ENCODE measurements at regions of chr9 and their contacts with region 1.

Region 1: GRCh38 chr9:16309469-16310271 is 560.8 kb downstream of the BNC2 start:
- DNase-seq: peak; percentile 34 to 57
- ATAC-seq: peak; percentile 61 to 85 (median 78)
- H3K4me3 ChIP-seq: no peak overlapping the region
- H3K27ac ChIP-seq: peak overlapping the region in 4 of 10 donors; percentile 37 to 48 (median 43)
- H3K4me1 ChIP-seq: peaks cover 0 to 13% (median 5%) of the 10 kb centered on the region in 9 donors
- H3K27me3 ChIP-seq: peaks cover 0 to 20% (median 0%) of the 10 kb centered on the region in 7 donors
- CTCF ChIP-seq: no peak

Region 2: DNA sequence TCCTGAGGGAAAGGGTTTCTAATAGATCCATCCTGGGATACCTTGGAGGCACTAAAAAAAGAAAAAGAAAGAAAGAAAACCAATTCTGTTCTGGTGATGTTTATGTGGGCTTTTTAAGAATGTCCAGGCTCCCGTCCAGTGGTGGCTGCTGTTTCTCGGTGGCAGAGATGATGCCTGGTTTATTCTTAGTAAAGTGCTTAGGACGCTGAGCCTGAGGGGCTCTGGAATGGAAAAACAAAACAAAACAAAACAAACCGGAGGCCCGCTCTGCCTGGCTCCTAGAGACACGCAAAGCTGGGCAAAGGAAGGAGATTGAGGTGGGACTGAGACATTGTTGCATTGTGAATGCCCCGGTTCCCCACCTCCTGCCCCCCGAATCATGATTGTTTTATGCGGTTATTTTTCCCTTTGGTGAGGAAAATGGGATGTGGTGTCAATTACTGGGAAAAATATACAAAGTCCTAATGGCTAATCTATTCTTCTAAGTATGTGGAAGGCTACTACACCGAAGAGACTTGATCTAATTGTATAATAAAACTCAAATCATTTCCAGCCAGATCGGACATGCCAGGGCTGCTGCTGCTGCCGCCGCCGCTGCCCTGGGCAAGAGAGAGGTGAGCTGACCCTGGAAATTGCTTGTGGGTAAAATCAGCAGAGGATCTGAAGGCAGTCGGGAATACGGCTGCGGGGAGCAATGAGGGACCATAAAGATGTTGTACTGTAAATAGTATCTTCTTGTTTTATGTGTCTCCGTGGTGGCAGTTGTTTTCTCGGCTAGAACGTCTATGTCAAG is 111.9 kb before region 1 on chr9:
- intact Hi-C with region 1: no loop called
- DNase-seq: peak in 1 of 2 donors; percentile 17
- ATAC-seq: peak; percentile 38 to 89 (median 74)
- H3K4me3 ChIP-seq: peak overlapping the region in 4 of 10 donors; percentile 1 to 26 (median 14)
- H3K27ac ChIP-seq: peak overlapping the region in 4 of 10 donors; percentile 21 to 69 (median 62)
- H3K4me1 ChIP-seq: peaks cover 0 to 18% (median under 1%) of the 10 kb centered on the region in 9 donors
- H3K27me3 ChIP-seq: peaks cover 0 to 6% (median 0%) of the 10 kb centered on the region in 7 donors
- CTCF ChIP-seq: no peak

Region 3: GRCh38 chr9:16352791-16353411 is 43.2 kb after region 1 on chr9:
- intact Hi-C with region 1: loop called in 1 of 10 experiments (anchors 10 kb)
- DNase-seq: no peak
- ATAC-seq: peak in 5 of 8 donors; percentile 38 to 69 (median 64)
- H3K4me3 ChIP-seq: no peak overlapping the region
- H3K27ac ChIP-seq: peak overlapping the region in 1 of 10 donors; percentile 61
- H3K4me1 ChIP-seq: peaks cover 0 to 11% (median 0%) of the 10 kb centered on the region in 9 donors
- H3K27me3 ChIP-seq: no peaks in the 10 kb centered on the region
- CTCF ChIP-seq: no peak

Region 4: DNA sequence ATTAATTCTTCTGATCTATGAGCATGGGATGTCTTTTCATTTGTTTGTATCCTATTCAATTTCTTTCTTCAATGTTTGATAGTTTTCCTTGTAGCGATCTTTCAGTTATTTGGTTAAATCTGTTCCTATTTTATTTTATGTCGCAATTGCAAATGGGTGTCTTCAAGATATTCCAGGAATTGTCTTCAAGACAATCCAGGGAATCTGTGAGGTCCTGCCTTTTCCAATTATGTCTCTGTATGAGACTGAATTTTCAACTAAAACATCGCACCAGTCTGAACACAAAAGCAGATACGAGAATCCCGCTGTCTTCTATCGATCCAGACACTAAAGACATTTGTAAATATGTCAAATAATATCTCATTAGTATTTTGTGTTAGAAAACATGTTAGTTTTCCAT is 75.3 kb after region 1 on chr9:
- intact Hi-C with region 1: no loop called
- DNase-seq: no peak
- ATAC-seq: no peak
- H3K4me3 ChIP-seq: no peak overlapping the region
- H3K27ac ChIP-seq: no peak overlapping the region
- H3K4me1 ChIP-seq: peaks cover 0 to 6% (median 0%) of the 10 kb centered on the region in 9 donors
- H3K27me3 ChIP-seq: no peaks in the 10 kb centered on the region
- CTCF ChIP-seq: no peak